OCI-LY7 (cell line): ENCODE measurements at regions of chr1 and their contacts with region 1.

Region 1: DNA sequence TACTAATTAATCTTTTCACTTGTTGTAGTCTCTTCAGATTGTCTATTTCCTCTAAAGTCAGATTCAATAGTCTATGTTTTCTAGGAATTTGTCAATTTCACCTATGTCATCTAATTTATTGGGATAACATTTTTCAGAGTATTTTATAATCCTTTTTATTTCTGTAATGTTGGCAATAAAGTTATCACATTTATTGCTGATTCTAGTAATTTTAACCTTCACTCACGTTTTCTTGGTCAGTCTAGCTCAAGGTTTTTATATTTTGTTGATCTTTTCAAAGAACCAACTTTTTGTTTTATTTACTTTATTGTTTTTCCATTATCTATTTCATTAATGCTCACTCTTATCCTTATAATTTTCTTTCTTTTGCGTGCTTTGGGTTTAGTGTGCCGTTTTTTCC is 97.9 kb upstream of the GNG12 start:
- DNase-seq: no peak
- H3K4me3 ChIP-seq: no peak overlapping the region
- H3K27ac ChIP-seq: no peak overlapping the region
- H3K4me1 ChIP-seq: no peaks in the 10 kb centered on the region
- CTCF ChIP-seq: no peak

Region 2: DNA sequence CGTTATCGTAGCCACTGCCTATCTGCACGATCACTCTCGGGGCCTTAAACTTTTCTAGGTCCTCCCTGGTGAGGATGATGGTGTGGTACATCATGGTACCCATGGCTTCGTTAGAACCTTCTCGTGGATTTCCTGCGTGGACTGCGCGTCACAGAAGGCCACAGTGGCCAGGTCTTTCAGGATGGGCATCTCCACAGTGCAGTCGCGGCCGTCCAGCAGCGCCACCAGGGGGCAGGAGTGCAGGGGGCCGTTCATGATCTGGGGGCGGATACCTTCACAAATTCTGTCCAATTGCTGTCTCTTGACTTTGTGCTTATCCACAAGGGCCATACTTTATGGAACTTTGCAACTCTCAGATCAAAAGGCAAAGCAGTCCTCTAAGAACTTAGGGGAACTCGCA is 231.6 kb after region 1 on chr1:
- CTCF ChIA-PET with region 1: no interaction called
- POLR2A ChIA-PET with region 1: no interaction called
- intact Hi-C with region 1: no loop called
- DNase-seq: no peak
- H3K4me3 ChIP-seq: no peak overlapping the region
- H3K27ac ChIP-seq: no peak overlapping the region
- H3K4me1 ChIP-seq: peaks cover 14% of the 10 kb centered on the region
- CTCF ChIP-seq: peak; percentile 43

Region 3: GRCh38 chr1:68542586-68542985 is 611.4 kb after region 1 on chr1:
- CTCF ChIA-PET with region 1: no interaction called
- POLR2A ChIA-PET with region 1: no interaction called
- intact Hi-C with region 1: loop called (anchors 5 kb)
- DNase-seq: no peak
- H3K4me3 ChIP-seq: no peak overlapping the region
- H3K27ac ChIP-seq: no peak overlapping the region
- H3K4me1 ChIP-seq: no peaks in the 10 kb centered on the region
- CTCF ChIP-seq: no peak